H1 (cell line): ENCODE measurements at regions of chr1 and their contacts with region 1.

Region 1: DNA sequence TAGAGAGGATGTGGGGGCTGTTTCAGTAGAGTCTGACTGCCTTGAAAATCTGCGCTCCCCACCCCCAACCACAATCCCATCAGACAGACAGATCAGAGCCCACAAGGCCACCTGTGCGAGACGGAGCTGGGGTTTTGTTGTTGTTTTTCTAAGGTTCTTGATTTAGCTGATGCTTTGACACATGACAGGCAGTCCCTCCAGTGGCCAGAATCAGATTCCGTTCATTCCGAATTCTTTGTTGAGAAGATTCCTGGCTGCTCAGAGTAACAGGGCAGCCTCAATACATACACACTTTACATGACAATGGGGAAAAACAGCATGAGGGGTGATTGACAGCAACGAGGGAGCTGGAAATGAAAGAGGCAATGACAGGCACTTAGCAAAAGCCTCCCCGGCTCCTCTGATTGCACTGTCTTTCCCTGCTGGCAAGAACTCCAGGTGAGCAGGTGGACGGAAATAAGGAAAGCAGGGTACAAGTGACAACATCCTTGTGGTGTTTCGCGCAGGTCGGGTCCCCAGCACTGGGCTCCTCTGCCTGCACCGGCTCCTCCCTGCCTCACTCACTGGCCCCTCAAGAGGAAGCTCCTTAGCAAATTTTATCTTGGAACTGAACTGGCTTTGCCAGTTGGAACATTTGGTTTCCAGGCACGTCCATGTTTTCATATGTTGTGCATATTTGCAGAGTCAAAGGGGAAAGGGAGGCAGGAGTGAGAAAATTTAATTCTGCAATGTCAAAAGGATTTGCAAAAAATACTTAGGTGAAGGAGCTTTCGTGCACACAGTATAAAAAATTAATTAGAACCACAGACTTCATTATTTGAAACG is 148.7 kb downstream of the PGBD5 start:
- DNase-seq: peak; percentile 74 to 87
- H3K4me3 ChIP-seq: peak overlapping the region in 3 of 4 experiments; percentile 18 to 38 (median 32); a peak in 3 of 8 replicates
- H3K27ac ChIP-seq: no peak overlapping the region
- H3K4me1 ChIP-seq: peaks cover 9 to 20% (median 11%) of the 10 kb centered on the region in 4 experiments
- H3K27me3 ChIP-seq: no peaks in the 10 kb centered on the region
- CTCF ChIP-seq: peak in 2 of 3 experiments; percentile 7 to 28; a peak in 2 of 4 replicates
- EP300 ChIP-seq: peak in 1 of 2 experiments; percentile 81; a peak in 1 of 3 replicates
- POLR2A ChIP-seq: no peak
- RAD21 ChIP-seq: peak; percentile 22 to 46

Region 2: DNA sequence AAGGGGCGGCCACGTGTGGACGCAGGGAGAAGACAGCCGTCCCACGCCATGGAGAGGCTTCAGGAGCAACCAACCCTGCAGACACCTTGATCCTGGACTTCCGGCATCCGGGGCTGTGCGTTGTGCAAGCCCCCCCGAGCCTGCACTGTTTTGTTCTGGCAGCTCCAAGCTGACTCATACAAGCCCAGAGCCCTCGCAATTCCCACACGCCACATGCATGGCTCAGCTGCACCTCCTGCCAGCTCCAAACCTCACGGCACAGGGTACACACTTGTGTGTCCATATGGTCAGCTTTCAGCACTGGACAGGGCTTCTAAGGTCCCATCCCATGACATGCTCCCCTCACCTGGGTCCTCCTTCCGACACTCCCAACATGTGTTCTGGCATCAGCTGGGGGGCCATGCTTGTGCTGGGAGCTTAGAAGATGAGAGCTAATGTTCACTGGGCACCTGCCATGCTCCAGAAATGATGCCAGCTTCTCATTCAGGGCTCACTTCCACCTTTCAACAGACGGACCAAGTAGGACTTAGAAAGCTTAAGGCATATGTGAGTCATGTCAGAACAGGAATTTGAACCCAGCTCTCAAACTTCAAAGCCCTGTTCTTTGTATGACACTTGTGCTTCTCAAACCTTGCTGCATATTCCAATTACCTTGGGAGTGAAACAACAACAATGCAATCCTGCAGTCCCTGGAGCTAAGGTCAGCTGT is 11.4 kb after region 1 on chr1:
- CTCF ChIA-PET with region 1: interaction called, 10 read pairs
- POLR2A ChIA-PET with region 1: interaction called, 14 read pairs
- DNase-seq: no peak
- H3K4me3 ChIP-seq: no peak overlapping the region
- H3K27ac ChIP-seq: no peak overlapping the region
- H3K4me1 ChIP-seq: peaks cover 0 to 11% (median 5%) of the 10 kb centered on the region in 4 experiments; a peak in 6 of 7 replicates
- H3K27me3 ChIP-seq: peaks cover 0 to 6% (median 2%) of the 10 kb centered on the region in 4 experiments; a peak in 4 of 7 replicates
- CTCF ChIP-seq: no peak
- EP300 ChIP-seq: no peak
- POLR2A ChIP-seq: no peak
- RAD21 ChIP-seq: no peak

Region 3: DNA sequence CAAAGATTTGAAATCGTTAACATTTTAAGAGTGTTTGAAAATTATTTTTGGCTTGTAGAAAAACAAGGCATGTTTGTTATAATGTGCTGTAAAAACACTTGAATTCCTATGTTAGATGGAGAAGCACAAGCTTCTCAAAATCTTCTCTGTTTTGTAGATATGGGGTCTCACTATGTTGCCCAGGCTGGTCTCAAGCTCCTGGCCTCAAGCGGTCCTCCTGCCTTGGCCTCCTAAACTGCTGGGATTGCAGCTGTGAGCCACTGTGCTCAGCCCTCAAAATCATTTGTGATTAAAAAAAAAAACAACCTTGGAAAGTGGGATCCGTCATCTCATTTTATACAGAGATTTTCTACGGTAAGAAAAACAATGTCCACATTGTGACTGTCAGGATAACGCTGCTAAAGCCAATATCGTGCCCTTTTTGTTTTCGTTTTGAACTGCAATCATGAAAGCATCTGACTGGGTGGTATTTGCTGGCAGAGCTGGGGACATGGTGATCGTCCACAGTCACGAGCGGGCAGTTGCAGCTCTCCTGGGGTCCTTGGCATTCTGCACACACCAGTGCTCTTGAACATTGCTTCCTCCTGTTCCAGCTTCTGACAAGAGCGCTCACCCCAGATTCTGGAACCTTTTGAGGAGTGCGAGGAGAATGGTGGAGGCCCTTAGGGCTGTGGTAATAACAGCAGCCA is 36.2 kb after region 1 on chr1:
- CTCF ChIA-PET with region 1: no interaction called
- POLR2A ChIA-PET with region 1: no interaction called
- DNase-seq: no peak
- H3K4me3 ChIP-seq: no peak overlapping the region
- H3K27ac ChIP-seq: no peak overlapping the region
- H3K4me1 ChIP-seq: peaks cover 0 to 2% (median 0%) of the 10 kb centered on the region in 4 experiments; a peak in 1 of 7 replicates
- H3K27me3 ChIP-seq: no peaks in the 10 kb centered on the region
- CTCF ChIP-seq: no peak
- EP300 ChIP-seq: no peak
- POLR2A ChIP-seq: no peak
- RAD21 ChIP-seq: no peak